ENCODE measurements at regions of chr1 and their contacts with region 1.

Region 1: GRCh38 chr1:31548907-31549808 is 27.2 kb upstream of the TINAGL1 start:
- DNase-seq: no peak
- H3K4me3 ChIP-seq: peak overlapping the region; percentile 31
- CTCF ChIP-seq: peak; percentile 84

Region 2: DNA sequence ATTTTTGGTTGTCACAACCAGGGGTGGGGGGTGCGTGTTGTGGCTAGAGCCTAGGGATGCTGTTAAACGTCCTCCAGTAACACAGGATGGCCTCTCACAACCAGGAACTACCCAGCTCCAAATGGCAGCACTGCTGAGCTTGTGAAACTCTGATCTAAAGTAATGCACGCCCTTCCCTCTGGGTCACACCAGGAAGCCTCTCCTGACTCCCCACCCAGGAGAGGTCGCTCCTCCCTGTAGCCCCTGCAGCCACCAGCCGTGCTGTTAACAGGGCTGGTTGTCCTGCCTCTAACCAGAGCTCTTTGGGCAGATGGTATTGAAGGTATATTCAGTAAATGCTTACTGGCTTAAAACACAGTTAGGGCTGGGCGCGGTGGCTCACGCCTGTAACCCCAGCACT is 382.7 kb before region 1 on chr1:
- CTCF ChIA-PET with region 1: interaction called, 17 read pairs
- POLR2A ChIA-PET with region 1: no interaction called
- DNase-seq: no peak
- H3K4me3 ChIP-seq: no peak overlapping the region
- CTCF ChIP-seq: no peak

Region 3: DNA sequence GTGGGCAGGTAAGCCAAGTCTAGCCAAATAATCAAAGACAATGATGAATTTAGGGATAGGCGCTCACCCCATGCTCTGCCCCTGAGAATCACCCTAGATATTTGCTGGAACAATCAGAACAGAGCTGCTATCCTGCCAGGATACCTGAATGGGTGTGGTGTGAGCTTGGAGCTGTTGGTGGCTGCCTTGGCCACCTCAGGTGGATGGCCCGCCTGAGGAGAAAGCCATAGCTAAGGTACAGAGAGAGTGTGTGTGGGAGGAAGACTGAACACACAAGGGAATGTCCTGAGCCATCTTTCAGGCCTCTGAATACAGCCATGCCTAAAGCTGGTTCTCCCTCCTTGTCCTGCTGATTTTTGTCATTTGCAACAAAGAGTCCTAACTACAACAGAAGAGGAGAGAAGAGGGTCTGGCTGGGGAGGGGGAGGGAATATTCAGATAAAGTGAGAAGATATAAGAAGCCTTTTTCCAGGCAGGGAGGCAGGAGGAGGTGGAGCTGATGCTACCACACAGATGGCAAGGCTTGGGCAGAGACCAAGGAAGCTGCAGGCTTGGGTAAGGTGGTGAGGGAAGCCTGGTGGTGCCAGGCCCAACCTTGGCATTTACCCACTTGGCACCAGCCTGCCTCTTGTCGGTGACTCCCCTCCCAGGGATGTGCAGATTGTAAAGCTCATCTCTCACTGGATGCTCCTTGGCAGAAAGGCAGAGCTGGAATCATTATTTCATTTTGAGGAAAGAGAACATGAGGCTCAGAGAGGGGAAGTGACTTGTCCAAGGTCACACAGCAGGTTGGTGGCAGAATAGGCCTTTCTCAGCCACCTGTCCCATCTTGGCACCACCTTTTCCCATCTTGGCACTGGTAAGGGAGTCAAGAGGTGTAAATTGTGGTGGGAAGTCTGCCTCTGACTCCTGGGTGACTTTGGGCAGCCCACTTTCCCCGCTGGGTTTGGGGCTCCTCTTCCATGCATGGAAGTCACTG is 359.2 kb before region 1 on chr1:
- CTCF ChIA-PET with region 1: interaction called, 46 read pairs
- POLR2A ChIA-PET with region 1: no interaction called
- DNase-seq: no peak
- H3K4me3 ChIP-seq: no peak overlapping the region
- CTCF ChIP-seq: no peak

Region 4: DNA sequence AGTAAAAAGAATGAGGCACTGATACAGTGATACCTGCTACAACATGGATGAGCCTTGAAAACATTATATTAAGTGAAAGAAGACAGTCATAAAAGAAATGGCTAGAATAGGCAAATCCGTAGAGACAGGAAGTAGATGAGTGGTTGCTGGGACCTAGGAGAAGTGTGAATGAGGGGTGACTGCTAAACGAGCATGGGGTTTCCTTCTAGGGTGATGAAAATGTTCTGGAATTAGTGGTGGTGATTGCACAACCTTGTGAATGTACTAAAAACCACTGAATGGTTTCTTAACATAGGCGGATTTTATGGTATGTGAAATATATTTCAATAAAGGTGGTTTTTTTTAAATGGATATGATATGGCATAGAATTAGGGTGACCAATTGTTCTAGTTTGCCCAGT is 148.8 kb before region 1 on chr1:
- CTCF ChIA-PET with region 1: interaction called, 116 read pairs
- POLR2A ChIA-PET with region 1: no interaction called
- DNase-seq: no peak
- H3K4me3 ChIP-seq: no peak overlapping the region
- CTCF ChIP-seq: no peak

Region 5: GRCh38 chr1:31497601-31498000 is 51.6 kb before region 1 on chr1:
- CTCF ChIA-PET with region 1: no interaction called
- POLR2A ChIA-PET with region 1: no interaction called
- DNase-seq: peak; percentile 51
- H3K4me3 ChIP-seq: no peak overlapping the region
- CTCF ChIP-seq: no peak

Region 6: GRCh38 chr1:31531177-31531999 is 17.8 kb before region 1 on chr1:
- CTCF ChIA-PET with region 1: interaction called, 36 read pairs
- POLR2A ChIA-PET with region 1: no interaction called
- DNase-seq: no peak
- H3K4me3 ChIP-seq: no peak overlapping the region
- CTCF ChIP-seq: no peak

Region 7: DNA sequence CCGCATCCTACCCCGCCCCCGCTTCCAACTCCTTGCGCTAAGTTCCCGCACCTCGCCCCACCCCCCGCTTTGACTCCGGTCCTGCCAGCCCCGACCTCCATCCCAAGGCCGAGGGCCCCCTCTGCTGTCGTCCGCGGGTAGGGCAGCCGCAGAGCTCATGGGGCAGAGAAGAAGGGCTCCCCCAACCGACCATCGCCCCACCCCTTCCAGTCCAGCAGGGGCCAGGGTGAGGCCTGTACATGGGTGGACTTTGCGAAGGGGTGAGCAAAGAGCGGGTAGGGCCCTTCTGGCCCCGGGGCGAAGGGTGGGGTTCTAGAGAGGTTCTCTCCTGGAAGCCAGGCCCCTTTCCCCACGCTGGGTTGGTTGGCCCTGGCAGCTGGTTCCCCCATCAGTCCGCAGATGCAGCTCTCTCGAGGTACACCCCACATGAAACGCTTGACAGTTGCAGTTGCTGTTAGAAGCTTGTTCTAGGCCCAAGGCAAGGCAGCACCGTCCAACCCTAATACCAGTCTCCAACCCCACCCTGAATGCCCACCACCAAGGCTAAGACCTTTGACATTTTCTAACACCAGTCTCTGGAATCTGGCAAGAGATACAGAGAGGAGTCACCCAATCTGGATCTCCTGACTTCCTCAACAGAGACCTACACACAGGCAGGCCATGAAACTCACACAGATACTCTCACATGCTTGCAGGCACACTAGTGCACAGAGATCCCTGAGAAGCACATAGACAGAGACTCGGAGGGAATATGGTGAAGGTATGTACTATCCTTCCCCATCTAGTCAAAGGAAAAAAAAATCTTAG is 240.3 kb after region 1 on chr1:
- CTCF ChIA-PET with region 1: interaction called, 16 read pairs
- POLR2A ChIA-PET with region 1: interaction called, 4 read pairs
- DNase-seq: peak; percentile 49
- H3K4me3 ChIP-seq: peak overlapping the region; percentile 76
- CTCF ChIP-seq: peak; percentile 99

Measured in AG04449 (cell line).